H1 (cell line): ENCODE measurements at regions of chr7 and their contacts with region 1.

Region 1: GRCh38 chr7:23431702-23432199 is 38.5 kb downstream of the IGF2BP3 start:
- DNase-seq: no peak
- H3K4me3 ChIP-seq: no peak overlapping the region
- H3K27ac ChIP-seq: no peak overlapping the region
- H3K4me1 ChIP-seq: peaks cover 0 to 14% (median 8%) of the 10 kb centered on the region in 4 experiments; a peak in 4 of 7 replicates
- H3K27me3 ChIP-seq: no peaks in the 10 kb centered on the region
- CTCF ChIP-seq: no peak
- EP300 ChIP-seq: no peak
- POLR2A ChIP-seq: no peak
- RAD21 ChIP-seq: no peak

Region 2: GRCh38 chr7:23273141-23273599 is 158.6 kb before region 1 on chr7:
- CTCF ChIA-PET with region 1: no interaction called
- POLR2A ChIA-PET with region 1: no interaction called
- DNase-seq: peak; percentile 77 to 97
- H3K4me3 ChIP-seq: peak overlapping the region in 2 of 4 experiments; percentile 2 to 31; a peak in 3 of 8 replicates
- H3K27ac ChIP-seq: no peak overlapping the region
- H3K4me1 ChIP-seq: peaks cover 0 to 3% (median 0%) of the 10 kb centered on the region in 4 experiments; a peak in 2 of 7 replicates
- H3K27me3 ChIP-seq: no peaks in the 10 kb centered on the region
- CTCF ChIP-seq: peak; percentile 89 to 97 (median 93)
- EP300 ChIP-seq: no peak
- POLR2A ChIP-seq: no peak
- RAD21 ChIP-seq: peak; percentile 87

Region 3: GRCh38 chr7:23308754-23309153 is 123.0 kb before region 1 on chr7:
- CTCF ChIA-PET with region 1: no interaction called
- POLR2A ChIA-PET with region 1: no interaction called
- DNase-seq: no peak
- H3K4me3 ChIP-seq: no peak overlapping the region
- H3K27ac ChIP-seq: no peak overlapping the region
- H3K4me1 ChIP-seq: no peaks in the 10 kb centered on the region
- H3K27me3 ChIP-seq: no peaks in the 10 kb centered on the region
- CTCF ChIP-seq: no peak
- EP300 ChIP-seq: no peak
- POLR2A ChIP-seq: peak in 1 of 2 experiments; percentile 31; a peak in 1 of 3 replicates
- RAD21 ChIP-seq: no peak

Region 4: GRCh38 chr7:23419845-23420244 is 11.9 kb before region 1 on chr7:
- CTCF ChIA-PET with region 1: interaction called, 12 read pairs
- POLR2A ChIA-PET with region 1: interaction called, 4 read pairs
- DNase-seq: no peak
- H3K4me3 ChIP-seq: no peak overlapping the region
- H3K27ac ChIP-seq: no peak overlapping the region
- H3K4me1 ChIP-seq: peaks cover 2 to 17% (median 4%) of the 10 kb centered on the region in 4 experiments; a peak in 3 of 7 replicates
- H3K27me3 ChIP-seq: no peaks in the 10 kb centered on the region
- CTCF ChIP-seq: no peak
- EP300 ChIP-seq: no peak
- POLR2A ChIP-seq: no peak
- RAD21 ChIP-seq: no peak

Region 5: GRCh38 chr7:23445326-23445725 is 13.6 kb after region 1 on chr7:
- CTCF ChIA-PET with region 1: interaction called, 8 read pairs
- POLR2A ChIA-PET with region 1: interaction called, 10 read pairs
- DNase-seq: no peak
- H3K4me3 ChIP-seq: no peak overlapping the region
- H3K27ac ChIP-seq: no peak overlapping the region
- H3K4me1 ChIP-seq: peaks cover 0 to 3% (median 1%) of the 10 kb centered on the region in 4 experiments; a peak in 2 of 7 replicates
- H3K27me3 ChIP-seq: no peaks in the 10 kb centered on the region
- CTCF ChIP-seq: no peak
- EP300 ChIP-seq: no peak
- POLR2A ChIP-seq: no peak
- RAD21 ChIP-seq: no peak

Region 6: GRCh38 chr7:23454881-23455506 is 23.2 kb after region 1 on chr7:
- CTCF ChIA-PET with region 1: interaction called, 11 read pairs
- POLR2A ChIA-PET with region 1: interaction called, 8 read pairs
- DNase-seq: no peak
- H3K4me3 ChIP-seq: no peak overlapping the region
- H3K27ac ChIP-seq: no peak overlapping the region
- H3K4me1 ChIP-seq: peaks cover 0 to 14% (median 10%) of the 10 kb centered on the region in 4 experiments; a peak in 6 of 7 replicates
- H3K27me3 ChIP-seq: no peaks in the 10 kb centered on the region
- CTCF ChIP-seq: no peak
- EP300 ChIP-seq: no peak
- POLR2A ChIP-seq: peak in 1 of 2 experiments; percentile 35; a peak in 1 of 3 replicates
- RAD21 ChIP-seq: no peak

Region 7: DNA sequence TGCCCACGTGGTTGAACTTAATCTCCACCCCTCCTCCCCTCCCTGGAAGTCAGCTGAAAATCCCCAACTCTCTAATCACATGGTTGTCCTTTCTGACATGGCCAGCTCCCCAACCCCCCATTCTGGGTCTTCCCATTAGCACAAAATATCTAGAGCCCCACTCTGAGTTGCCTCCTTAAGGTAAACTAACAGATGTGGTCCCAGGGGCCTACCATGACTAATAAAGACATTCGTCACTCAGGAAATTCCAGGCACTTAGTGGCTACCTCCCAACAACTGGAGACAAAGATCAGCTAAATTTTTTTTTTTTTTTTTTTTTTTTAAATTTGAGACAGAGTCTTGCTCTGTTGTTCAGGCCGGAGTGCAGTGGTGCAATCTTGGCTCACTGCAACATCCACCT is 186.5 kb after region 1 on chr7:
- CTCF ChIA-PET with region 1: no interaction called
- POLR2A ChIA-PET with region 1: no interaction called
- DNase-seq: no peak
- H3K4me3 ChIP-seq: no peak overlapping the region
- H3K27ac ChIP-seq: no peak overlapping the region
- H3K4me1 ChIP-seq: no peaks in the 10 kb centered on the region
- H3K27me3 ChIP-seq: no peaks in the 10 kb centered on the region
- CTCF ChIP-seq: no peak
- EP300 ChIP-seq: no peak
- POLR2A ChIP-seq: no peak
- RAD21 ChIP-seq: no peak